MCF 10A (cell line): ENCODE measurements at regions of chr4 and their contacts with region 1.

Region 1: GRCh38 chr4:154720123-154720522 is 23.7 kb upstream of the LRAT start:
- DNase-seq: peak; percentile 72
- H3K4me3 Mint-ChIP-seq: no peak overlapping the region
- H3K27ac Mint-ChIP-seq: peak overlapping the region; percentile 93
- H3K4me1 Mint-ChIP-seq: peaks cover 33% of the 10 kb centered on the region
- H3K27me3 Mint-ChIP-seq: no peaks in the 10 kb centered on the region
- CTCF ChIP-seq: no peak

Region 2: DNA sequence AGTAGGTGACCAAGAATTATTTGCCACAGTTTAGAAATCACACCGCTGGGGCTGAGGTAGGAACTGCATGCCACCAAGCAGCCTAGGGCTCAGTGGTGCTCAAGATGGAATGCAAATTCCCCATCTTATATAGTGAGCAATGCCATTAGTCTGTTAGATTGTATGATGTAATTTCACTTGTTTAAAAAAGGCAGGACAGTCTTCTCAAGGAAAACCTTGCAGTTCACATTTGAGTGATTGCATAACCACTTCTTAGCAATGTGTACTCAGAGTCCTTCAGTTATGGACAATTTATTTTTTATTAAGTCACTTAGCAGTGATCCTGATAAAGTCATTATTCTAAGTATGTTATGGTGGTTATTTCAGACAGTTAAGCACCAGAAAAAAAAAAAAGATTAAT is 788.3 kb before region 1 on chr4:
- CTCF ChIA-PET with region 1: no interaction called
- POLR2A ChIA-PET with region 1: no interaction called
- intact Hi-C with region 1: no loop called
- DNase-seq: peak; percentile 51
- H3K4me3 Mint-ChIP-seq: no peak overlapping the region
- H3K27ac Mint-ChIP-seq: no peak overlapping the region
- H3K4me1 Mint-ChIP-seq: peaks cover 7% of the 10 kb centered on the region
- H3K27me3 Mint-ChIP-seq: no peaks in the 10 kb centered on the region
- CTCF ChIP-seq: no peak

Region 3: DNA sequence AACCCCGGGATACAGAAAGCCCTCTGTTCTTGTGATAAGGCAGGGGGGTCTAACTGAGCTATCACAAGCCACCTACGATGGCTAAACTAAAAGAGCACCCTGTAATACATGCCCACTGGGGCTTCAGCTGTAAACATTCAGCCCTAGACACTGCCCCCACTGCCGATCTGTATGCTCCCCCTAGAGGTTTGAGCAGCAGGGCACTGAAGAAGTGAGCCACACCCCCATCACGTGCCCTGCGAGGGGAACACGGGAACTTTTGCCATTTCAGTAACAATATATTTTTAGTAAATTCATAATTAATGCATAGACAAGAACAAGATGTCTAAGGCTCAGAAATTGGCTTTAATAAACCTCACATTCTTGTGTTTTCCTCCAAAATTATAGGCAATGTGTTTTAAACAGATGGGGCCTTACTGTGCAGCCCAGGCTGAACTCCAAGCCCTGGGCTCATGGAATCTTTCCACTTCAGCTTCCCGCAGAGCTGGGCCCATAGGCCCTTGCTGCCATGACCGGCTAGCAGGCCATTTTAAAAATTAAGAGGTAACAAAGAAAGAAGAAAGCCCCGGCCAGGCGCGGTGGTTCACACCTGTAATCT is 695.9 kb before region 1 on chr4:
- CTCF ChIA-PET with region 1: no interaction called
- POLR2A ChIA-PET with region 1: no interaction called
- intact Hi-C with region 1: no loop called
- DNase-seq: no peak
- H3K4me3 Mint-ChIP-seq: no peak overlapping the region
- H3K27ac Mint-ChIP-seq: no peak overlapping the region
- H3K4me1 Mint-ChIP-seq: no peaks in the 10 kb centered on the region
- H3K27me3 Mint-ChIP-seq: no peaks in the 10 kb centered on the region
- CTCF ChIP-seq: no peak

Region 4: DNA sequence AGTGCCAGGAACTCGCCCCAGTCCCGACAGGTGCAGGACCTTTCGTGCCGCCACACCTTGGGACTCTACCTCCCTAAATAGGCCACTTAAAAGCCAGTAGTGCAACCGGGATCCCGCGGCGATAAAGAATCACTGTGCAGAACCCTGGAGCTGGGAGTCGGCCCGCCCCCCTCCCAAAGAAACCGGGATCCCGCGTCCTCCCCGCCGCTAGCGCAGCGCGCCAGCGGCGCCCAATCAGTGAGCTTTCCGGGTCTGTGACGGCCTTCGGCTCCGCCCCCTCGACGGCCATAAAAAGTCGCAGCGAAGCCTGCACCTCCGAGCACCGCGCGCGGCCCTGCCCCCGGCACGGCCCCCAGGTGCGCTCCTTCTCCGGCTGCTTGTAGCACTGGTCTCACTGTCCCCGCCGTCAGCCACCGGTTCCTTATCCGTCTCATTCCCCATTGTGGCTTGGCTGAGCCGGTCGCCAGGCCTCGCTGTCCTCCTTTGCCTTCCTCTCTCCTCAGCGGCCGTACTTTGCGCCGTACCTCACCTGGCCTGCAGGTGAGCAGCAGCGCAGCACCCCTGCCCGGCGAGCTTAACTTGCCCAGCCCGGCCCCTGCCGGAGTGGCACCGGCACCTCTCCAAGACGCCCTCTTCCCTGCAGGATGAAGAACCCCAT is 23.7 kb after region 1 on chr4 and contains the start of gene LRAT:
- CTCF ChIA-PET with region 1: interaction called, 6 read pairs
- POLR2A ChIA-PET with region 1: interaction called, 43 read pairs
- intact Hi-C with region 1: no loop called
- DNase-seq: peak; percentile 77
- H3K4me3 Mint-ChIP-seq: peak within 1 kb of the TSS; percentile 98
- H3K27ac Mint-ChIP-seq: peak within 1 kb of the TSS; percentile 88
- H3K4me1 Mint-ChIP-seq: peaks cover 36% of the 10 kb centered on the region
- H3K27me3 Mint-ChIP-seq: no peaks in the 10 kb centered on the region
- CTCF ChIP-seq: peak; percentile 19
- total RNA-seq, gene LRAT: 3.5 and 5.8 TPM in 2 replicates